Naive thymus-derived CD8-positive, alpha-beta T cell (primary cell): ENCODE measurements at regions of chr1 and their contacts with region 1.

Region 1: DNA sequence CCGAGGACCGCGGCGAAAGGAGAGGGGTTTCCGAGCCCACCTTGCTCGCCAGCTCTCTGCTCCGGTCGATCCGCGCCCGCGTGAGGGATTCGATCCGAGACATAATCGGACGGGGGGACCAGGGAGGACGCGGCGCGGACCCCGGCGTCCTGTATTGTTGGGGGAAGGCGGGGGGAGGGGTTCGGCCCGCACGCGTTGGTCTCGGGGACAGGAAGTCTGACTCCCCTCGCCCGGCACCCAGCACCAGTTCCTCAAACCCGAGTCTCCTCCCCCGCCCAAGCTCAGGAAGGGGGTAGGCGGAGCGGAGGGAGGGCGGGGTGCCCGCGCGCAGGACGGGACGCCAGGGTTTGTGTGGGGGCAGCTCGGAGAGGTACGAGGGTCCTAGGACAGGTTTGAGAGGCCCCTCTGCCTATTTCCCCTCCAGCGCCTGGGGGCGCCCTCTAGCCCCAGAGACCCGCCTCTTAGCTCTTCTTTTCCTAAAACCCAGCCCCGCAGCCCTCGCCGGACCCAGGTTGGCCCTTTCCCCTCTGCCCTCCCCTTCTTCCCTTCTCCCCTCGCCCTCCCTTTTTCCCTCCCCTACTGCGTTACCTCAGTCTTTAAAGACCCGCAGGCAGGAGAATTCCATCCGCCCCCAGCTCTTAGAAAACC is at the start of gene ARHGEF2:
- DNase-seq: peak; percentile 63 to 89 (median 72)
- ATAC-seq: peak; percentile 59 to 65
- H3K4me3 Mint-ChIP-seq: peak within 1 kb of the TSS; percentile 89 to 100 (median 96)
- H3K27ac Mint-ChIP-seq: peak within 1 kb of the TSS; percentile 85 to 97 (median 95)
- H3K4me1 Mint-ChIP-seq: peaks cover 51 to 78% (median 70%) of the 10 kb centered on the region in 4 donors
- H3K27me3 Mint-ChIP-seq: no peaks in the 10 kb centered on the region
- polyA plus RNA-seq, gene ARHGEF2: 13.8 to 22.0 (median 15.8) TPM

Region 2: DNA sequence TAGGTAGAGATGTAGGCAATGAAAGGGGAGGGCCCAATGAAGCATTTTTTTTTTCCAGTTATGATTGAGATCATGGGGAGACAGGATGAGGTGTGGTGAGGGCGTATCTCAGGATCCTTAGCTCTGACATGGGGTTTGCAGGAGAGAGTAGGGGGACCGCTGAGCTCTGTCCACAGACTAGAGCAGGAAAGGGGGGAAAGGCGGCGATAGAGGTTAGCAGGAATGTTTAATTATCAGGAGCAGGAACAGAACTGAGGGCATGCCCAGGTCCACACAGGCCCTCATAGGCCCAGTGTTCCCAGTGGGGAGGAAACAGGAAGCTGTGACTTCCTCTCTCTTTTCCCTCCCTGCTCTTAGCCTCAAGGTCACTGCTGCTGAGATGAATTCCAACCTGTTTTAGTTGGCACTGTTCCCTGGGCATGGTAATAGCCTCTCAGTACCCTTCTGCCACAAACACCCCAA is 37.9 kb before region 1 on chr1:
- POLR2A ChIA-PET with region 1: interaction called, 83 read pairs
- DNase-seq: no peak
- ATAC-seq: peak in 1 of 2 donors; percentile 30
- H3K4me3 Mint-ChIP-seq: peak overlapping the region in 6 of 10 donors; percentile 5 to 73 (median 45)
- H3K27ac Mint-ChIP-seq: peak overlapping the region; percentile 57 to 90 (median 82)
- H3K4me1 Mint-ChIP-seq: peaks cover 20 to 70% (median 59%) of the 10 kb centered on the region in 4 donors
- H3K27me3 Mint-ChIP-seq: no peaks in the 10 kb centered on the region

Region 3: GRCh38 chr1:156104065-156104810 is 125.8 kb after region 1 on chr1:
- POLR2A ChIA-PET with region 1: no interaction called
- DNase-seq: peak in 7 of 10 donors; percentile 28 to 72 (median 44)
- ATAC-seq: peak; percentile 23 to 26
- H3K4me3 Mint-ChIP-seq: peak overlapping the region in 5 of 10 donors; percentile 47 to 85 (median 69)
- H3K27ac Mint-ChIP-seq: peak overlapping the region; percentile 86 to 100 (median 96)
- H3K4me1 Mint-ChIP-seq: peaks cover 20 to 66% (median 41%) of the 10 kb centered on the region in 4 donors
- H3K27me3 Mint-ChIP-seq: peaks cover 0 to 6% (median 4%) of the 10 kb centered on the region in 5 donors